ENCODE measurements at regions of chr17 and their contacts with region 1.

Region 1: DNA sequence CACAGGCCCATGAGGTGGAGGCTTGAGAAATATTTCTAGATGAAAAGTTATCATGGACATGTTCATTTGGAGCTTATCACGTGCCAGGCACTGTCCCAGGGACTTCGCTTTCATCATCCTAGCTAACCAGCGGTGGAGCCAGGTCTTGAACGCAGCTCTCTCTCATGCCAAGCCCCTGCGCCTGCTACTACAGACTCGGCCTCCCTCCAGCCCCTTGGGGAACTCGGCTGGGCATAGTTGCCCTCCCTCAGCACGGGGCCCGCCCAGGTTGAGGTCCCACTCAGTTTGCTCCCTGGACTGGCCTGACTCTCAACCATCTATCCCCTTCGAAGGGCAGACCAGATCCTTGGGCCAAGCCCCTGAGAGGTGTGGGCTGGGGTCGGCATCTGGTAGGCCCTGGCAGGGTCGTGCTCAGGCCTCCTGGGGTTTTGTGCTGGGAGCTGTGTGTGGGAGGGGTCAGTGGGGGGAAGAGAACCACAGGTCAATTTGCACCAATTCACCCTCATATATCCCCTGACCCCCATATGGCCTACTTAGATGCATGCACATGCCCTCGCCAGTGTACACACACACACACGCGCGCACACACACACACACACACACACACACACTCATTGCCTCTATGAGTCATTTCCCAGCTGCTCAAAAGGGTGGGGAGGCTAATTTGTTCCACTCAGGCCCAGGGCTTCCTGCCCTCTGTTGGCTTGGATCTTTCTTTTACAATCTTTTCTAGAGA is 12.1 kb upstream of the SCN4A start:
- DNase-seq: peak in 3 of 5 donors; percentile 32 to 69 (median 69)
- ATAC-seq: peak; percentile 63 to 82 (median 73)
- H3K4me3 ChIP-seq: no peak overlapping the region
- H3K27ac ChIP-seq: peak overlapping the region; percentile 49 to 86 (median 78)
- H3K4me1 ChIP-seq: peaks cover 10 to 78% (median 53%) of the 10 kb centered on the region in 12 donors
- H3K27me3 ChIP-seq: peaks cover 0 to 4% (median 0%) of the 10 kb centered on the region in 9 donors
- CTCF ChIP-seq: peak in 1 of 12 donors; percentile 26
- POLR2A ChIP-seq: no peak

Region 2: GRCh38 chr17:63798572-63799106 is 186.2 kb before region 1 on chr17:
- intact Hi-C with region 1: no loop called
- DNase-seq: no peak
- ATAC-seq: no peak
- H3K4me3 ChIP-seq: no peak overlapping the region
- H3K27ac ChIP-seq: no peak overlapping the region
- H3K4me1 ChIP-seq: no peaks in the 10 kb centered on the region
- H3K27me3 ChIP-seq: no peaks in the 10 kb centered on the region
- CTCF ChIP-seq: no peak
- POLR2A ChIP-seq: no peak

Region 3: GRCh38 chr17:63919311-63919723 is 65.5 kb before region 1 on chr17:
- intact Hi-C with region 1: loop called in 8 of 10 experiments (anchors 2 to 10 kb)
- DNase-seq: peak in 4 of 5 donors; percentile 49 to 58 (median 54)
- ATAC-seq: peak; percentile 59 to 86 (median 86)
- H3K4me3 ChIP-seq: no peak overlapping the region
- H3K27ac ChIP-seq: no peak overlapping the region
- H3K4me1 ChIP-seq: peaks cover 0 to 7% (median 0%) of the 10 kb centered on the region in 12 donors
- H3K27me3 ChIP-seq: no peaks in the 10 kb centered on the region
- CTCF ChIP-seq: peak; percentile 85 to 97 (median 91)
- POLR2A ChIP-seq: no peak

Region 4: DNA sequence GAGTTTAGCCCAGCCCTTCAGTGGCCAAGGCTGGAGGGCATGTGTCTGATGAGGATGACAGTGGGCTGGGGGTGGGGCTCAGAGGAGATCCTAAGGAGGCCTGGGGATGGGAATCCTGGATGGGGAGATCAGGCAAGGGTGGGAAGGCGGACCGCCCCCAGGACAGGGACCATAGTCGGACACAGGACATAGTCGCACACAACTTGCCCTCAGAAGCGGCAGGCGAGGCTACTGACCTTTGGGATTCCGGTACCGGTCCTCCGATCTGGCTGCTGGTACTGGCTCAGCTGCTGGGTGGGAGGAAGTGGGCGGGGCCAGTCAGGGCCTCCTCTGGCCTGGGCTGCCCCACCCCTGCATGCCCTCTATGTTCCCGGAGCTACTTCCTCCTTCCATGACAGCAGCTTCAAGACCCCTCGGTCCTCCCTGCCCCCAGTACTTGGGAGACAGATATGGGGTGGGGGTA is 53.7 kb before region 1 on chr17:
- intact Hi-C with region 1: loop called in 2 of 10 experiments (anchors 5 to 10 kb)
- DNase-seq: peak; percentile 82 to 86 (median 83)
- ATAC-seq: peak; percentile 77 to 95 (median 84)
- H3K4me3 ChIP-seq: peak overlapping the region in 11 of 12 donors; percentile 16 to 51 (median 34)
- H3K27ac ChIP-seq: peak overlapping the region; percentile 53 to 84 (median 74)
- H3K4me1 ChIP-seq: peaks cover 0 to 25% (median 14%) of the 10 kb centered on the region in 12 donors
- H3K27me3 ChIP-seq: no peaks in the 10 kb centered on the region
- CTCF ChIP-seq: no peak
- POLR2A ChIP-seq: peak in 1 of 2 donors; percentile 12

Region 5: GRCh38 chr17:63946440-63947367 is 38.1 kb before region 1 on chr17:
- intact Hi-C with region 1: loop called in 4 of 10 experiments (anchors 2 to 5 kb)
- DNase-seq: peak in 3 of 5 donors; percentile 42 to 54 (median 46)
- ATAC-seq: peak in 3 of 4 donors; percentile 68 to 83 (median 79)
- H3K4me3 ChIP-seq: no peak overlapping the region
- H3K27ac ChIP-seq: no peak overlapping the region
- H3K4me1 ChIP-seq: peaks cover 0 to 15% (median 0%) of the 10 kb centered on the region in 12 donors
- H3K27me3 ChIP-seq: no peaks in the 10 kb centered on the region
- CTCF ChIP-seq: peak; percentile 75 to 85 (median 81)
- POLR2A ChIP-seq: no peak

Region 6: GRCh38 chr17:63998721-63999677 is 14.2 kb after region 1 on chr17:
- intact Hi-C with region 1: loop called in 1 of 10 experiments (anchors 1 kb)
- DNase-seq: peak in 1 of 5 donors; percentile 60
- ATAC-seq: no peak
- H3K4me3 ChIP-seq: peak overlapping the region; percentile 24 to 71 (median 61)
- H3K27ac ChIP-seq: peak overlapping the region in 6 of 12 donors; percentile 38 to 85 (median 73)
- H3K4me1 ChIP-seq: peaks cover 3 to 51% (median 25%) of the 10 kb centered on the region in 12 donors
- H3K27me3 ChIP-seq: peaks cover 0 to 28% (median 12%) of the 10 kb centered on the region in 9 donors
- CTCF ChIP-seq: no peak
- POLR2A ChIP-seq: no peak

Region 7: DNA sequence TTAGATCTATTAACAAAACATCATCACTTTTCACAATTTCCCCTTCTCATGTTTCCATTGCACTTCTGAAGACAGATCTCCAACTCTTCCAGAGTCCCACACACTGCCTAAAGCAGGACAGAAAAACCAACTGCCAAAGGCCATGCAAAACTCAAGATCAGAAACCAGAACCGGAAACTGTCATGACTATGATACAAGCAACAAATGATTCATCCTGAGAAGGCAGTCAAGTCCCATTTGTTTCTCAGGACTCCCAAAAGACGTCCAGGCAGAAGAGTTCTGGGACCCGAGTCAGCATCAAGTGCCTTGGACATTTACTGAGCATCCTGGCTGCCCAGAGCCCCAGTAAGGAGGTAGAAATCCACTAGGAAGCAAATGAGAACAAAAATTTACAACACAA is 106.3 kb after region 1 on chr17:
- intact Hi-C with region 1: no loop called
- DNase-seq: no peak
- ATAC-seq: no peak
- H3K4me3 ChIP-seq: no peak overlapping the region
- H3K27ac ChIP-seq: peak overlapping the region in 1 of 12 donors; percentile 4
- H3K4me1 ChIP-seq: peaks cover 0 to 25% (median 4%) of the 10 kb centered on the region in 12 donors
- H3K27me3 ChIP-seq: no peaks in the 10 kb centered on the region
- CTCF ChIP-seq: no peak
- POLR2A ChIP-seq: no peak

Region 8: GRCh38 chr17:64385187-64386083 is 400.6 kb after region 1 on chr17:
- intact Hi-C with region 1: no loop called
- DNase-seq: peak; percentile 49 to 81 (median 58)
- ATAC-seq: peak; percentile 66 to 86 (median 84)
- H3K4me3 ChIP-seq: peak overlapping the region in 10 of 12 donors; percentile 3 to 63 (median 53)
- H3K27ac ChIP-seq: peak overlapping the region; percentile 3 to 95 (median 86)
- H3K4me1 ChIP-seq: peaks cover 0 to 94% (median 33%) of the 10 kb centered on the region in 12 donors
- H3K27me3 ChIP-seq: no peaks in the 10 kb centered on the region
- CTCF ChIP-seq: no peak
- POLR2A ChIP-seq: no peak